ENCODE measurements at regions of chr5 and their contacts with region 1.

Region 1: DNA sequence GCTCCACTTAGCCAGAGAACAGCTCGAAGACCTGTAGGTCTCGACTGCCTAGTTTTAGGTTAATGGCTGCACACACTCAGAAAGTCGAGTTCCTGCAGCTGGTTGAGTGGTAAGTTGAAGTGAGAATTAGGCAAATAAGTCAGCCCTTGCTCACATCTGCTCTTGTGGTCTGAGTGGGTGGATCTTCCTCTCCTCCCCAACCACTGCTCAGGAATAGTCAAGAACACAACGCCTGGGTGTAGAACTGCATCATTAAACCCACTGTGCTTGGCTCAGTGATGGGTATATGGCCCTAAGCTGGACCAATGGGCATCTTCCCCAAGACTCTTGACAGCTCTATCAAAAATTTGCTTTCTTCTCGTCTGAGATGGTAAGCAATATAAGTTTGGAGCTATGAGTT is 20.9 kb upstream of the ADAM19 start:
- DNase-seq: peak; percentile 96
- ATAC-seq: peak; percentile 73
- H3K4me3 ChIP-seq: no peak overlapping the region
- H3K27ac ChIP-seq: peak overlapping the region; percentile 79
- H3K4me1 ChIP-seq: peaks cover 88% of the 10 kb centered on the region
- H3K27me3 ChIP-seq: no peaks in the 10 kb centered on the region
- CTCF ChIP-seq: no peak
- EP300 ChIP-seq: peak; percentile 79 to 81
- POLR2A ChIP-seq: no peak
- RAD21 ChIP-seq: no peak

Region 2: DNA sequence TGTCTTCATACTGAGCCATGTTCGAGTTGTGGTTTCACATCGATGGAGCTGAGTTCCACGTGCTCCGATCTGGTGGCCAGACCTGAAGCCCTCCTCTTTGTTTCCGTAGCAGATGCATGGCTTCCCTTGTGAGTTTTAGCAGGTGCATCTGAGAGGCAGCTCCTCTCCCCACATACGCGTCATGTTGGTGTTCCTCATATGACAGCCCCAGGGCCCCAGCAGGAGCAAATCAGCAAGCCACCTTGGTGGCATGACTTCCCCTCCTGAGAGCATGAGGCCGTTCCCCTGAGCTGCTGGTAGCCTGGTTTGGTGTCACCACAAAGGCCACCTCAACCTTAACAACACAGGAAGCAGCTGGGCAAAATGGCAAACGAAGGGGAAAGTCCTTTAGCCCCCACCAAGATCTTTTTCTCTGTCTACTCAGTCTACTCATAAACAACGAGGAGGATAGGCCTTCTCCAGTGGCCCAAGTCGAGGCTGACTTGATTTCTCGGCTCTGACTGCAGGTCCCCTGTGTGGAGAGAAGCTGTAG is 324.7 kb before region 1 on chr5:
- CTCF ChIA-PET with region 1: no interaction called
- POLR2A ChIA-PET with region 1: interaction called, 10 read pairs
- RAD21 ChIA-PET with region 1: interaction called, 3 read pairs
- SMC1A ChIA-PET with region 1: no interaction called
- in situ Hi-C with region 1: no loop called
- intact Hi-C with region 1: loop called (anchors 10 kb)
- DNase-seq: peak; percentile 93
- ATAC-seq: peak; percentile 80
- H3K4me3 ChIP-seq: peak overlapping the region; percentile 60; the same call in 1 of the 2 replicates
- H3K27ac ChIP-seq: peak overlapping the region; percentile 97
- H3K4me1 ChIP-seq: peaks cover 56% of the 10 kb centered on the region
- H3K27me3 ChIP-seq: no peaks in the 10 kb centered on the region
- CTCF ChIP-seq: no peak
- EP300 ChIP-seq: peak; percentile 72 to 75; a peak in 3 of 4 replicates
- POLR2A ChIP-seq: peak; percentile 82
- RAD21 ChIP-seq: no peak

Region 3: GRCh38 chr5:157516626-157517325 is 79.7 kb before region 1 on chr5:
- CTCF ChIA-PET with region 1: interaction called, 3 read pairs
- POLR2A ChIA-PET with region 1: interaction called, 4 read pairs
- RAD21 ChIA-PET with region 1: interaction called, 34 read pairs
- SMC1A ChIA-PET with region 1: interaction called, 29 read pairs
- in situ Hi-C with region 1: no loop called
- intact Hi-C with region 1: loop called (anchors 2 kb)
- DNase-seq: no peak
- ATAC-seq: no peak
- H3K4me3 ChIP-seq: no peak overlapping the region
- H3K27ac ChIP-seq: no peak overlapping the region
- H3K4me1 ChIP-seq: peaks cover 29% of the 10 kb centered on the region
- H3K27me3 ChIP-seq: no peaks in the 10 kb centered on the region
- CTCF ChIP-seq: no peak
- EP300 ChIP-seq: no peak
- POLR2A ChIP-seq: no peak
- RAD21 ChIP-seq: no peak

Region 4: DNA sequence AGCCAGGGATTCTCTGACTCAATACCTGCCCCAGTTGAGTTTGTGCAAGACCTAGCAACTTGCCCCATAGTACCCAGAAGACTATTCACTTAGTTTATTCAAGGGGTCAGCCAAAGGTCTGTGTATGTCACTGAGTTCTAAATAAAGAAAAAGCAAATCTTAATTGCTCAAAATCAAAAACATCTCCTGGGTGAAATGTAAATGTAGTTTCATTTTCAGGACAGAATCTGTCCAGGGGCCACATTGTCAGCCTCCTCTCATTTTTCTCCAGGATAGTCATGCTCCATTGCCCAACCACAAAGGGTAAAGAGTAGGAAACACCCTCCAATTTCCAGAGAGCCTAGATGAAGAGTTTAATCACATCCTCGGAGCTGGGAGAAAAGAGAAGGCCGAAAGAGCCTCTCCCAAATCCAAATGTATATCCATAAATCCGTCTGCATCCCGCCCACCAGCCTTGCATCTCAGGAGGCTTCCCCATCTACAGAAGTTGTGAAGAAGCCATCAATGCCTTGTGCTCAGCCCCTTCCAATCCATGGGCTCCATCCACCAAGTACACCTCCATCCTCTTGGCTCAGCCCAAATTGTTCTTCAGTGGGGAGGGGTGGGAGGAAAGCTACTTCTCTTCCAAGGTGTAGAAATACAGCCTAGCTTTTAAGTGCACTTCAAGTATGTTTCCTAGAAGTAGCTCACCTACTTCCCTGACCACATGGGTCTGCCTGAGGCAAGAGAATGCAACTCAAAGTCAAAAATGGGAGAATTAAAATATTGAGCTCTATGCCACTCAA is 47.8 kb before region 1 on chr5:
- CTCF ChIA-PET with region 1: no interaction called
- POLR2A ChIA-PET with region 1: interaction called, 6 read pairs
- RAD21 ChIA-PET with region 1: interaction called, 13 read pairs
- SMC1A ChIA-PET with region 1: interaction called, 36 read pairs
- in situ Hi-C with region 1: no loop called
- intact Hi-C with region 1: no loop called
- DNase-seq: no peak
- ATAC-seq: peak; percentile 42
- H3K4me3 ChIP-seq: 0 out of 2 replicates have a peak overlapping the region, but pooled peaks have one; percentile 21
- H3K27ac ChIP-seq: peak overlapping the region; percentile 35; the same call in 1 of the 2 replicates
- H3K4me1 ChIP-seq: peaks cover 48% of the 10 kb centered on the region
- H3K27me3 ChIP-seq: no peaks in the 10 kb centered on the region
- CTCF ChIP-seq: no peak
- EP300 ChIP-seq: no peak
- POLR2A ChIP-seq: no peak
- RAD21 ChIP-seq: no peak

Region 5: GRCh38 chr5:157582731-157583620 is 13.5 kb before region 1 on chr5:
- CTCF ChIA-PET with region 1: interaction called, 14 read pairs
- POLR2A ChIA-PET with region 1: interaction called, 18 read pairs
- RAD21 ChIA-PET with region 1: interaction called, 50 read pairs
- SMC1A ChIA-PET with region 1: interaction called, 146 read pairs
- in situ Hi-C with region 1: no loop called
- intact Hi-C with region 1: loop called (anchors 1 kb)
- DNase-seq: no peak
- ATAC-seq: peak; percentile 85
- H3K4me3 ChIP-seq: no peak overlapping the region
- H3K27ac ChIP-seq: peak overlapping the region; percentile 23; the same call in 1 of the 2 replicates
- H3K4me1 ChIP-seq: peaks cover 33% of the 10 kb centered on the region
- H3K27me3 ChIP-seq: no peaks in the 10 kb centered on the region
- CTCF ChIP-seq: peak; percentile 8 to 30 (median 13); a peak in 2 of 6 replicates
- EP300 ChIP-seq: no peak
- POLR2A ChIP-seq: no peak
- RAD21 ChIP-seq: peak; percentile 48

Region 6: GRCh38 chr5:157670662-157671591 is 74.4 kb after region 1 on chr5 and contains the start of gene C5orf52:
- CTCF ChIA-PET with region 1: interaction called, 4 read pairs
- POLR2A ChIA-PET with region 1: interaction called, 3 read pairs
- RAD21 ChIA-PET with region 1: interaction called, 4 read pairs
- SMC1A ChIA-PET with region 1: interaction called, 27 read pairs
- in situ Hi-C with region 1: no loop called
- intact Hi-C with region 1: no loop called
- DNase-seq: peak; percentile 23
- ATAC-seq: peak; percentile 72
- H3K4me3 ChIP-seq: peak within 1 kb of the TSS; percentile 68
- H3K27ac ChIP-seq: no peak within 1 kb of the TSS
- H3K4me1 ChIP-seq: peaks cover 5% of the 10 kb centered on the region
- H3K27me3 ChIP-seq: no peaks in the 10 kb centered on the region; a peak in 3 of 4 replicates
- CTCF ChIP-seq: no peak
- EP300 ChIP-seq: no peak
- POLR2A ChIP-seq: no peak
- RAD21 ChIP-seq: 0 out of 2 replicates have a peak, but pooled peaks have one; percentile 3
- polyA plus RNA-seq, gene C5orf52: not detected

Measured in GM12878 (cell line).